ENCODE measurements at regions of chr7 and their contacts with region 1.

Region 1: GRCh38 chr7:86926732-86927131 is 132.7 kb downstream of the ELAPOR2 start:
- DNase-seq: no peak
- ATAC-seq: peak in 1 of 2 donors; percentile 66
- H3K4me3 ChIP-seq: no peak overlapping the region
- H3K27ac ChIP-seq: no peak overlapping the region
- H3K4me1 ChIP-seq: no peaks in the 10 kb centered on the region
- H3K27me3 ChIP-seq: no peaks in the 10 kb centered on the region

Region 2: DNA sequence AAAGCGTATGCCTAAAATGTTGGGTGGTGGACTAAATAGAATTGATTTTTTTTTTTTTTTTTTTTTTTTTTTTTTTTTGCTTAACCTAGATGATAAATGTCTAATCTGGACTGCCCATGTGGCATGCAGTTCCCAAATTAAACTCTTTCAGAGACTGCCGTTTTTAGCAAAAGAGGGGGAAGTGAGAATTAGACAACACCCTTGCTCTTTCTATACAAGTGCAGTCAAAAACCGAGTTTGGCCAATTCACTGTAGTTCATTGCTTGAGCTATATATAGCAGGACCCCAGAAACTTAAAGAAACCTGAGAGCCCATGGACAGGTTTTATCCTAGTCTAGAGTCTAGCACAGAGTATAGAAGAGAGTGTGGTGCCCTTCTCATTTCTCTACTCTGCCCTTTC is 141.1 kb before region 1 on chr7:
- intact Hi-C with region 1: no loop called
- DNase-seq: no peak
- ATAC-seq: no peak
- H3K4me3 ChIP-seq: no peak overlapping the region
- H3K27ac ChIP-seq: no peak overlapping the region
- H3K4me1 ChIP-seq: no peaks in the 10 kb centered on the region
- H3K27me3 ChIP-seq: no peaks in the 10 kb centered on the region

Region 3: DNA sequence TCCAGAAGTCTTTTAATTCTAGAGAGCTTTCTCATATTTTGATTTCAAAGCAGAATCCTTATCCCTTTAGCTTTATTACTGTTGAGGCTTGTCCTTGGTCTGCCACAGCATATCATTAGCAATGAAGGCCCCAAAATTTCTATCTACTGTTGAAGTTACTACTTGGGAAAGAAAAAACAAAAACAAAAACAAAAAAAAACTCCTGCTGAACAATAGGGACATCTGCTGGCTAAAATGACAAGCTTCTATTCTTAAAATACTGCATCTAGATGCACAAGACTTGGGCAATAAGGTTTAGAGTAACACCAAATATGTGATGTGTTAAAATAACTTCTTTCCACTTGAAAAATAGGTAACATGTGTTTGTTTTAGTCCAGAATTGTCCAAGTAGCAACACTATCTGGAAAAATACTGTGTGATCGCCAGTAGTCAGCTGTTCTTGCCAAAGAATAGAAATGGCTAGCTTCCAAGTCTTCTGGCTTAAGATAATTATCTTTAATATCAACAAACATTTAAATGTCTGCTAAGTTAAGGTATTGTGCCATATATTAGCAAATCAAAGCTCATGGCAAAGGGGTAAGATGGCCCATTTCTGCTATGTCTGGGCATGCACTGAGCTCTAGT is 221.7 kb after region 1 on chr7:
- intact Hi-C with region 1: loop called in 2 of 4 experiments (anchors 5 kb)
- DNase-seq: no peak
- ATAC-seq: no peak
- H3K4me3 ChIP-seq: no peak overlapping the region
- H3K27ac ChIP-seq: no peak overlapping the region
- H3K4me1 ChIP-seq: no peaks in the 10 kb centered on the region
- H3K27me3 ChIP-seq: no peaks in the 10 kb centered on the region

Region 4: DNA sequence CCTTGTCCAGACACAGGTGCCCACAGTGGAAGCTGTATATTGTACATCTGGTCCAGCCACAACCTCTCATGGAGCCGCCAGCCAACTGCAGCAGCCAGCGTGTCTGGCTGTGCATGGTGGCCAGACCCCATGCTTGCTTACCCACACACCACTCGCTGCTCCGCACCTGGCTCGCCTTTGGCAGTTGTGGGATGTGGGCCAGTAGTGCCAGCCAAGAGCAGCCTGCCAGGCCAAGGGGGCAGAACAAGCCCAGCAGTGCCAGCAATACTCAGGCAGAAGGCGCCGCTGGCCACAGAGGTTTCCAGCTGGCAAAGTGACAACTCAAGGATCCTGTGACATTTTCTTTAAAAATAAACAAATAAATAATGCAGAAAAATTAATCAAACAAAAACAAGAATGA is 304.5 kb after region 1 on chr7:
- intact Hi-C with region 1: loop called (anchors 5 to 10 kb)
- DNase-seq: peak; percentile 40 to 81 (median 65)
- ATAC-seq: peak; percentile 86 to 87
- H3K4me3 ChIP-seq: no peak overlapping the region
- H3K27ac ChIP-seq: no peak overlapping the region
- H3K4me1 ChIP-seq: peaks cover 5% of the 10 kb centered on the region
- H3K27me3 ChIP-seq: no peaks in the 10 kb centered on the region

Region 5: GRCh38 chr7:87548123-87548919 is 621.6 kb after region 1 on chr7:
- intact Hi-C with region 1: no loop called
- DNase-seq: no peak
- ATAC-seq: no peak
- H3K4me3 ChIP-seq: no peak overlapping the region
- H3K27ac ChIP-seq: no peak overlapping the region
- H3K4me1 ChIP-seq: no peaks in the 10 kb centered on the region
- H3K27me3 ChIP-seq: no peaks in the 10 kb centered on the region

Measured in right cardiac atrium (tissue), 5 donors.